Activated CD4-positive, alpha-beta memory T cell treated with anti-CD3 and anti-CD28 coated beads, Interleukin-2, amount 10 ng/mL, durations not matched to agents 7 days and 5 days (primary cell): ENCODE measurements at regions of chr17 and their contacts with region 1.

Region 1: DNA sequence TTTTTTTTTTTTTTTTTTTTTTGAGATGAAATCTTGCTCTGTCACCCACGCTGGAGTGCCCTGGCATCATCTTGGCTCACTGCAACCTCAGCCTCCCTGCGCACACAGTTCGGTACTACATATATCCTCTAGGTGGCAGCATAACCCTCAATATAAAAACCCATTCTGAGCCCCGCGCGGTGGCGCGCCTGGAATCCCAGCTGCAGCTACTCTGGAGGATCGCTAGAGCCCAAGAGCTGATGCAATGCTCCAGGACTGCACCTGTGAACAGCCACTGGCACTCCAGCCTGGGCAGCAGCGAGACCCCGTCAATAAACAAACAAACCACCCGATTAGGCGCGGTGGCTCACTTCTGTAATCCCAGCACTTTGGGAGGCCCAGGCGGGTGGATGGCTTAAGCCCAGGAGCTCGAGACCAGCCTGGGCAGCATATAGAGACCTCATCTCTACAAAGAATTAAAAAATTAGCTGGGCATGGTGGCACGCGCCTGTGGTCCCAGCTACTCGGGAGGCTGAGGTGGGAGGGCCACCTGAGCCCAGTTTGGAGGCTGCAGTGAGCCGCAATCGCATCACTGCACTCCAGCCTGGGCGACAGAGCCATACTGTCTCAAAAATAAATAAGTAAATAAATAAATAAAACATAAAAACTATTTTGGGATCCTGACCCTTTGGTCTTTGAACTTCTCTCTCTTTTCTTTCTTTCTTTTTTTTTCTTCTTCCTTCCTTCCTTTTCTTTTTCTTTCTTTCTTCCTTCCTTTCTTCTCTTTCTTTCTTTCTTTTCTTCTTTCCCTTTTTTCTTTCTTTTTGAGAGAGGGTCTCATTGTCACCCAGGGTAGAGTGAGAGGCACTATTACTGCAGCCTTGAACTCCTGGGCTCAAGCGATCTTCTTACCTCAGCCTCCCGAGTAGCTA is 15.4 kb upstream of the AKAP10 start:
- DNase-seq: peak; percentile 76
- H3K4me3 Mint-ChIP-seq: no peak overlapping the region
- H3K27ac Mint-ChIP-seq: no peak overlapping the region
- H3K4me1 Mint-ChIP-seq: peaks cover 6% of the 10 kb centered on the region
- H3K27me3 Mint-ChIP-seq: peaks cover 2% of the 10 kb centered on the region

Region 2: DNA sequence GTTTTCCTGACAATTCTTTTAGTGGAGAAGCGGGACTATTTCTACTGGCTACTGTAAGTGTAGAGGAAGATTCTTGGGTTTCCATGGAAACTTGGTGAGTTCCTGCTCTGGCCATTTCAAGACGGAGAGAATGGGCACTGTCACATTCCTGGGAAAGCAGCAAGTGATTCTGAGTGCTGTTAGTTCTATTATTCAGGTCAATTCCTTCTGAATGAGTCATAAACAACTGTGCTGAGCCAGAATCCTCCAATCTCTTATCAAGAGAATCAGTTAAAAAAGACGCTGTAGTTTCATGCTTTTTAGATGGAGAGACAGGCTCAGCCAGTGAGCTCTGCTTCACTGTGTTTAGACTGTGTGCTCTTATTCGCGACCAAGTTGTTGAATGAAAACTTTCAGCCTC is 35.0 kb before region 1 on chr17:
- CTCF ChIA-PET with region 1: no interaction called
- POLR2A ChIA-PET with region 1: no interaction called
- DNase-seq: no peak
- H3K4me3 Mint-ChIP-seq: no peak overlapping the region
- H3K27ac Mint-ChIP-seq: no peak overlapping the region
- H3K4me1 Mint-ChIP-seq: peaks cover 32% of the 10 kb centered on the region
- H3K27me3 Mint-ChIP-seq: no peaks in the 10 kb centered on the region

Region 3: GRCh38 chr17:20009302-20010098 is 16.4 kb after region 1 on chr17 and contains the start of gene SPECC1:
- CTCF ChIA-PET with region 1: interaction called, 21 read pairs
- POLR2A ChIA-PET with region 1: interaction called, 3 read pairs
- DNase-seq: peak; percentile 89
- H3K4me3 Mint-ChIP-seq: peak within 1 kb of the TSS; percentile 86
- H3K27ac Mint-ChIP-seq: no peak within 1 kb of the TSS
- H3K4me1 Mint-ChIP-seq: peaks cover 14% of the 10 kb centered on the region
- H3K27me3 Mint-ChIP-seq: peaks cover 46% of the 10 kb centered on the region
- total RNA-seq, gene SPECC1: 9.6 to 10.3 TPM

Region 4: GRCh38 chr17:20114466-20114865 is 121.4 kb after region 1 on chr17:
- CTCF ChIA-PET with region 1: interaction called, 35 read pairs
- POLR2A ChIA-PET with region 1: interaction called, 3 read pairs
- DNase-seq: no peak
- H3K4me3 Mint-ChIP-seq: no peak overlapping the region
- H3K27ac Mint-ChIP-seq: no peak overlapping the region
- H3K4me1 Mint-ChIP-seq: peaks cover 2% of the 10 kb centered on the region
- H3K27me3 Mint-ChIP-seq: peaks cover 2% of the 10 kb centered on the region

Region 5: GRCh38 chr17:20121359-20122253 is 128.5 kb after region 1 on chr17:
- CTCF ChIA-PET with region 1: interaction called, 35 read pairs
- POLR2A ChIA-PET with region 1: no interaction called
- DNase-seq: peak; percentile 65
- H3K4me3 Mint-ChIP-seq: no peak overlapping the region
- H3K27ac Mint-ChIP-seq: no peak overlapping the region
- H3K4me1 Mint-ChIP-seq: peaks cover 2% of the 10 kb centered on the region
- H3K27me3 Mint-ChIP-seq: peaks cover 6% of the 10 kb centered on the region